GM12878 (cell line): ENCODE measurements at regions of chr20 and their contacts with region 1.

Region 1: GRCh38 chr20:45857114-45857881 is at the starts of genes ACOT8 and ZSWIM3:
- DNase-seq: peak; percentile 100
- ATAC-seq: peak; percentile 98
- H3K4me3 ChIP-seq: peak within 1 kb of the TSS; percentile 97
- H3K27ac ChIP-seq: peak within 1 kb of the TSS; percentile 96
- H3K4me1 ChIP-seq: peaks cover 8% of the 10 kb centered on the region
- H3K27me3 ChIP-seq: no peaks in the 10 kb centered on the region
- CTCF ChIP-seq: no peak
- EP300 ChIP-seq: no peak; a peak in 1 of 4 replicates
- POLR2A ChIP-seq: peak; percentile 91
- RAD21 ChIP-seq: no peak
- polyA plus RNA-seq, gene ACOT8: 5.1 to 10.1 TPM
- polyA plus RNA-seq, gene ZSWIM3: 1.6 to 2.0 TPM

Region 2: DNA sequence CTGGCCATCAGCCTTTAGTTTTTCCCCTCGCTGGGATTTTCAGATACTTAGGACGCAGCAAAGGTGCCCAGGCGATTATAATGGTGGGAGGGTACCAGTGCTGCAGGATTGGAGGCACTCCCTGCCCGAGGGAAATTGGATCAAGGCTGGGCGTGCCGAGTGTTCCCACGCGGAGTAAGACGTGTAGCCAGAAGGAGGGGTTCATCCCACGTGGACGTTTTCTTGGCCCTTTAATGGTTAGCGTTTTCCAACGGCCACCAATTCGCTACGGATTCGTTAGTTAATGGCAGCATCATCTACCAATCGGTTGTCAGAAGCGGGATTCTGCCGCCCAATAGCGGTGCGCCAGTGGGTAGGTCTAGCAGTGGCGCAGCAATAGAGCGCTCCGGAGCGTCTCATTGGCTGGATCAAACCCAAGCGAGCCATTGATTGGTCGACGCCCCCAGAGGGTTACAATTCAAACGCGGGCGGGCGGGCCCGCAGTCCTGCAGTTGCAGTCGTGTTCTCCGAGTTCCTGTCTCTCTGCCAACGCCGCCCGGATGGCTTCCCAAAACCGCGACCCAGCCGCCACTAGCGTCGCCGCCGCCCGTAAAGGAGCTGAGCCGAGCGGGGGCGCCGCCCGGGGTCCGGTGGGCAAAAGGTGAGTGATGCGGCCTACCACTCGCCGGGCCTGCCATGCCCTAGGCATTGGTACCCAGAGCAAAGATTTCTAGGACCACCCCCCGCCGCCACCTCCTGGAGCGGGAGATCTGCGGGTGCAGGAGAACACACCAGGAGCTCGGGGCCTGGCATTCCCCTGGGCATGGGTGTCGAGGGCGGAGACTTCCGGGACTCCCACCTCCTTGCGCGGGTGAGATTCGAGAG is 44.9 kb before region 1 on chr20 and contains the start of gene UBE2C:
- CTCF ChIA-PET with region 1: no interaction called
- POLR2A ChIA-PET with region 1: interaction called, 8 read pairs
- RAD21 ChIA-PET with region 1: no interaction called
- SMC1A ChIA-PET with region 1: interaction called, 5 read pairs
- in situ Hi-C with region 1: no loop called
- intact Hi-C with region 1: loop called (anchors 5 kb)
- DNase-seq: peak; percentile 98
- ATAC-seq: peak; percentile 100
- H3K4me3 ChIP-seq: peak within 1 kb of the TSS; percentile 85
- H3K27ac ChIP-seq: peak within 1 kb of the TSS; percentile 93
- H3K4me1 ChIP-seq: no peaks in the 10 kb centered on the region
- H3K27me3 ChIP-seq: no peaks in the 10 kb centered on the region
- CTCF ChIP-seq: no peak
- EP300 ChIP-seq: no peak
- POLR2A ChIP-seq: peak; percentile 88
- RAD21 ChIP-seq: no peak
- polyA plus RNA-seq, gene UBE2C: 86.2 to 140 TPM

Region 3: GRCh38 chr20:45842169-45842812 is 15.0 kb before region 1 on chr20:
- CTCF ChIA-PET with region 1: interaction called, 11 read pairs
- POLR2A ChIA-PET with region 1: interaction called, 10 read pairs
- RAD21 ChIA-PET with region 1: interaction called, 6 read pairs
- SMC1A ChIA-PET with region 1: interaction called, 4 read pairs
- in situ Hi-C with region 1: no loop called
- intact Hi-C with region 1: no loop called
- DNase-seq: peak; percentile 33
- ATAC-seq: peak; percentile 98
- H3K4me3 ChIP-seq: no peak overlapping the region
- H3K27ac ChIP-seq: peak overlapping the region; percentile 63
- H3K4me1 ChIP-seq: peaks cover 14% of the 10 kb centered on the region
- H3K27me3 ChIP-seq: no peaks in the 10 kb centered on the region
- CTCF ChIP-seq: no peak
- EP300 ChIP-seq: no peak
- POLR2A ChIP-seq: no peak
- RAD21 ChIP-seq: no peak

Region 4: DNA sequence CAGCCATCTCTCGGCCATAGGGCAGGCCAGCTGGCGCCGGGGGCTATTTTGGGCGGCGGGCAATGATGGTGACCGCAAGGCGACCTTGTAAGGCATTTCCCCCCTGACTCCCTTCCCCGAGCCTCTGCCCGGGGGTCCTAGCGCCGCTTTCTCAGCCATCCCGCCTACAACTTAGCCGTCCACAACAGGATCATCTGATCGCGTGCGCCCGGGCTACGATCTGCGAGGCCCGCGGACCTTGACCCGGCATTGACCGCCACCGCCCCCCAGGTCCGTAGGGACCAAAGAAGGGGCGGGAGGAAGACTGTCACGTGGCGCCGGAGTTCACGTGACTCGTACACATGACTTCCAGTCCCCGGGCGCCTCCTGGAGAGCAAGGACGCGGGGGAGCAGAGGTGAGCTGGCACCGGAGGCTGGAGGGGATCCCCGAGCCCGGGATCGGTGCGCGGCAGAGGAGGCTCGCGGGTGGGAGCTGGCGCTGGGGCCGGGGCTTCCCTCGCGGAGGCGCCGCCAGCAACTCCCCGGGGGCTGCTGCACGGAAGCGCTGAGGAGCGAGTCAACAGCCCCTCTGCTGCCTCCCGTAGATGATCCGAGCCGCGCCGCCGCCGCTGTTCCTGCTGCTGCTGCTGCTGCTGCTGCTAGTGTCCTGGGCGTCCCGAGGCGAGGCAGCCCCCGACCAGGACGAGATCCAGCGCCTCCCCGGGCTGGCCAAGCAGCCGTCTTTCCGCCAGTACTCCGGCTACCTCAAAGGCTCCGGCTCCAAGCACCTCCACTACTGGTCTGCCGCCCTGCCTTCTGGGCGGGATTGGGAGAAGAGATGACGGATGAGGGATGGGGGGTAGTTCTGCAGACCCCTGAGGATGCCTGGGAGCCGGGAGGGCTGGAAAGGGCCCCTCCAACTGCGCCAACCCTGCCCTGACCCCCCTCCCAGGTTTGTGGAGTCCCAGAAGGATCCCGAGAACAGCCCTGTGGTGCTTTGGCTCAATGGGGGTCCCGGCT is 34.0 kb after region 1 on chr20 and contains the starts of genes CTSA and NEURL2:
- CTCF ChIA-PET with region 1: interaction called, 3 read pairs
- POLR2A ChIA-PET with region 1: interaction called, 4 read pairs
- RAD21 ChIA-PET with region 1: interaction called, 3 read pairs
- SMC1A ChIA-PET with region 1: interaction called, 3 read pairs
- in situ Hi-C with region 1: no loop called
- intact Hi-C with region 1: loop called (anchors 2 kb)
- DNase-seq: peak; percentile 51
- ATAC-seq: peak; percentile 87
- H3K4me3 ChIP-seq: peak within 1 kb of the TSS; percentile 83
- H3K27ac ChIP-seq: peak within 1 kb of the TSS; percentile 75
- H3K4me1 ChIP-seq: peaks cover 22% of the 10 kb centered on the region
- H3K27me3 ChIP-seq: no peaks in the 10 kb centered on the region
- CTCF ChIP-seq: peak in 1 of 3 experiments; percentile 26; a peak in 1 of 6 replicates
- EP300 ChIP-seq: peak; percentile 43 to 62; a peak in 2 of 4 replicates
- POLR2A ChIP-seq: peak; percentile 88
- RAD21 ChIP-seq: 0 out of 2 replicates have a peak, but pooled peaks have one; percentile 9
- polyA plus RNA-seq, gene CTSA: 7.1 to 8.6 TPM
- polyA plus RNA-seq, gene NEURL2: 0.97 to 1.8 TPM